GM10248 (cell line): ENCODE measurements at regions of chr16 and their contacts with region 1.

Region 1: GRCh38 chr16:48164907-48165726 is 9.3 kb upstream of the ABCC12 start:
- DNase-seq: peak; percentile 83
- CTCF ChIP-seq: peak; percentile 95

Region 2: DNA sequence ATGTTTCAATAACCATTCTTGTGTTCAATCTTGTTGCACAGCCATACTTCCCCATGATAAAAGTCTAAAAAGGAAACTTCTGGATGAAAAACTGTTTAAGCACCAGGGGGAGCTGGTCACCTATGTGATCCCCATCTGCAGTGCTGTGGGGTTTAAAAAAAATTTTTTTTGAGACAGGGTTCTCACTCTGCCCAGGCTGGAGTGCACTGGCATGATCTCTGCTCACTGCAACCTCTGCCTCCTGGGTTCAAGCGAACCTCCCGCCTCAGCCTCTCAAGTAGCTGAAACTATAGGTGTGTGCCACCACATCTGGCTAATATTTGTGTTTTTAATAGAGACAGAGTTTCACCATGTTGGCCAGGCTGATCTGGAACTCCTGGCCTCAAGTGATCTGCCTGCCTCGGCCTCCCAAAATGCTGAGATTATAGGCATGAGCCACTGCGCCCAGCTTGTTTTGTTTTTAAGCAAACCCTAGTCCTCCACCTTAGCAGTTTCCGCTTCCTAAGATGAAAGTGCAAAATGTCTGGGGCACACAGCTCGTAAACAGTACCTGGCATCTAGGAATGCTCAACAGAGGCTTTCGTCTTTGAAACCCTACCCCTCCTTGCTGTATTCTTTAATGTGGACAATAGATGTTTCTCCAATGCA is 1217.1 kb before region 1 on chr16:
- CTCF ChIA-PET with region 1: interaction called, 15 read pairs
- POLR2A ChIA-PET with region 1: no interaction called
- DNase-seq: peak; percentile 64
- CTCF ChIP-seq: peak; percentile 37

Region 3: DNA sequence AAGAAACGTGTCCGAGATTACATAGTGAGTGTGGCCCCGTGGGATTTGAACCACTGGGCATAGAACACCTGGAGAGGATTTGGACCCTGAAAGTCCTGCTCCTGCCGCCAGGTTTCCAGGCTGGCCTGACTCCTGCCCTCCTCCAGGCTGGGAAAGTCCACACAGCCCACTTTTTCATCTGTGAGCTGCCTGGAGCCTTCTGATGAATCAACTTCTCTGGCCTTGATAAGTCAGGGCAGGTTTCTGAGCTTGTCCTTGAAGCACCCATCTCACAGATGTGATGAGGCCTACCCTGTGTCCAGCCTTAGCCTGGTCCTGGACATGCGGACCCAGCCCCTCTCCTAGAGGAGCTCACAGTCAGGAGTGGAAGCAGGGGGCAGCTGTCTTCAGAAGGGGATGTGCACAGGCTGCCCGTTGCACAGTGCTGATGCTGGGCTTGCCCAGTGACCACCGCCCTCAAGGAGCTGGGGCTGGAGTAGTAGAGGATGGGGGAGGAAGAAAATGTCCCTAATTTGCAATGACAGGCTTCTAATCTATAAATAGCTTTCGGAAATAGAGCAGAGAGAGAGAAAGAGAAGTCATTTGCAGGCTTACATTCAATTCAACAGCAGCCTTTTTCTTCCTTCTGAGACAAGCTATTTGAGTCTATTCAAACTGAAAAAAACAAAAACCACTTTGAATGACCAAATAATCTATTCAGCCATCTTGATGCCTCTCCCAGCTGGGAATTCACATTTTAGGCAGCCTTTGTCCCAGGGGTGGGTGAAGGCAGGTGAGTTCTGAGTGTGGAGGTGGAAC is 1118.2 kb before region 1 on chr16:
- CTCF ChIA-PET with region 1: interaction called, 10 read pairs
- POLR2A ChIA-PET with region 1: no interaction called
- DNase-seq: peak; percentile 67
- CTCF ChIP-seq: no peak

Region 4: GRCh38 chr16:48054881-48055601 is 110.1 kb before region 1 on chr16:
- CTCF ChIA-PET with region 1: interaction called, 13 read pairs
- POLR2A ChIA-PET with region 1: no interaction called
- DNase-seq: peak; percentile 69
- CTCF ChIP-seq: peak; percentile 94

Region 5: DNA sequence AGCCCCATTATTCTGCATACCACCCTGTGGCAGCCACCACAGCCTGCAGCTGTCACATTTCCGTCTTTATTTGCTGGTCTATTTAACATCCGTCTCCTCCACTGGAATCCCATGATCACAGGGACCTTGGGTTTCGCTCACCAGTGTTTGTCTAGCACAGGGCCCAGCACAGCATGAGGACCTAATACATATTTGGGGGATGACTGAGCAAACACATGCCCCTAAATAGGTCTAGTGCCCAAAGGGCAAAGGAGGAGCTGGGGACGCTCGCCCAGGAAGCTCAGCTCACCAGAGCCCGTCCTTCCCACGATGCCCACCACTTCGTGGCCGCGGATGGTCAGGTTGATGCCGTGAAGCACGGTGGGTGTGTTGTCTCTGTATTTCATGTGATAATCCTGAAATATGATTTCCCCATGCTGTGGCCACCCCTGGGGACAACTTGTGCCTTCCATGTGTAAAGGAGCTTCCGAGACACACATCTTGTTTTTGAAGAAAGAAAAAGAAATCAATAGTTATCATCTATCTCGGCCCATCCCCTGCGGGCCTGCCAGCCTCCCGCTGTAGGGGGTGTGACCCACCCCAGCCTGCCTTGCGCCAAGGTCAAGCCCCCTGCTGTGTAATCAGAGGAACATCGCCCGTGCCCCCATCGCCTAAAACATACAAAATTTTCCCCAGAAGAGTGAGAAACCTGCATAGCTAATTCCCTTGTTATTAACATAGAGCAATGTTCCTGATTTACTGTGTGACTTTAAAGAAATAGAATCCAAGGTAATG is 11.7 kb after region 1 on chr16:
- CTCF ChIA-PET with region 1: interaction called, 25 read pairs
- POLR2A ChIA-PET with region 1: no interaction called
- DNase-seq: no peak
- CTCF ChIP-seq: no peak

Region 6: DNA sequence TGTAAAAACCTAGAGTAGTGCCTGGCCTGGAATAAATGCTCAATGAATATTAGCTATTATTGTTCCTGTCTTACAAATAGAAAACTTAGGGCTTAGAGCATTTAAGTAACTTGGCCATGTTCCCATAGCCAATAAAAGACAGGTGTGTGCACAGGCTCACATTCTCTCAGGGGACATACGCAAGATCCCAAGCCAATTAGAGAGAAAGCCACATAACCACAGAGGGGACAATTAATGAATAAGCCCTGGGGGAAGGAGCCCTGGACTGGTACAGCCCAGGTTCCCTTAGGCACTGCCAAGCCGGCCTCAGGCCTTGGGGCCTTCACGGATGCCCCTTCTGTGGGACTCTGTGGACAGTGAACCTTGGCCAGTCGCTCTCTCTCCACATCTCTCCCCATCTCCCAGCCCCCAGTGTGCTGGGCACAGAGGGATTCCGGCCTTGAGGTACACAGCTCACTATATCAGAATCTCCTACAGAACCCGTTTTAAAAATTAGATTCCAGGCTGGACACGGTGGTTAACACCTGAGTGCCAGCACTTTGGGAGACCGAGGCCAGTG is 17.9 kb after region 1 on chr16:
- CTCF ChIA-PET with region 1: interaction called, 10 read pairs
- POLR2A ChIA-PET with region 1: no interaction called
- DNase-seq: no peak
- CTCF ChIP-seq: no peak

Region 7: DNA sequence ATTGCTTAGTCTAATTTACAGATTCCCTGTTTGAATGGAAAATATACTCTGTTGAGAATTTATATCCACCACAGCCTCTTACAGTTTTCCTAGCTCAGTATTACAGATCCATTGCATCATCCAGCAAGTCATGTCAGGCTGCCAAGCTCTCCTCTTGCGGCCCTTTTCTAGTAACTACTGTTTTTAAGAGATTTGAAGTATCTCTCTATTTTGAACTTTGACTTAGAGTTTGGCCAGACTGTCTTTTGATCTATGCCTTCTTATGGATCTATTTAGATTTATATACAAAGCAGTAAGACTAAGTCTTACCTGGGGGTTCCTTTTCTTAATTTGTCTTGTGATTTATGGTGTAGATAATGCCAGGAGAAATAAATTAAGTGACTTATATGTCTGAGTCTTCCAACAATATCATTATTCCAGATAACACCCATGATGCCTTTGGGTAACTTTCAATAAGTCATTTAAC is 135.3 kb after region 1 on chr16:
- CTCF ChIA-PET with region 1: no interaction called
- POLR2A ChIA-PET with region 1: no interaction called
- DNase-seq: no peak
- CTCF ChIP-seq: no peak